Left cardiac atrium (tissue), 4 donors: ENCODE measurements at regions of chr14 and their contacts with region 1.

Region 1: DNA sequence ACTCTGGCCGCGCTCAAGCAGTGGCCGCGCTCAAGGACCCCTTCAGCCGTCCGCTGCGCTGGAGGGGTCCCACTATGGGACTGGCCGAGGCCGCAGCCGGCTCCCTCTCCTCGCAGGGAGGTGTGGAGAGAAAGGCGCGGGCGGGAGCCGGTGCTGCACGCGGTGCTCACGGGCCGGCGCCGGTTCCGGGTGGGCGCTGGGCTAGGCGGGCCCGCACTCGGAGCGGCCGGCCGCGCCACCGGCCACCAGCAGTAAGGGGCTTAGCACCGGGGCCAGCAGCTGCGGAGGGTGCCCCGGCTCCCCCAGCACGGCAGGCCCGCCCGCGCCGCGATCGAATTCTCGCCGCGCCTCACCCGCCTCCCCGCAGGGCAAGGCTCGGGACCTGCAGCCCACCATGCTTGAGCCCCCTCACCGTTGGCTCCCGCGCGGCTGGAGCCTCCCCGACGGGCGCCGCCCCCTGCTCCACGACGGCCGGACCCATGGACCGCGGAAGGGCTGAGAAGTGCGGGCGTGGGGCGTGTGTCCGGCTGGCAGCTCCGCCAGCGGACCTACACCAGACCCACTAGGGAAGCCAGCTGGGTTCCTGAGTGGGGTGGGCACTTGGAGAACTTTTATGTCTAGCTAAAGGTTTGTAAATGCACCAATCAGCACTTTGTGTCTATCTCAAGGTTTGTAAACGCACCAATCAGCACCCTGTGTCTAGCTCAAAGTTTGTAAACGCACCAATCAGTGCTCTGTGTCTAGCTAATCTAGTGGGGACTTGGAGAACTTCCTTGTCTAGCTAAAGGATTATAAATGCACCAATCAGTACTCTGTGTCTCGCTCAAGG is 49.5 kb downstream of the KLHL28 start:
- DNase-seq: peak; percentile 25
- ATAC-seq: peak; percentile 66 to 69

Region 2: GRCh38 chr14:44657696-44658388 is 254.4 kb before region 1 on chr14:
- intact Hi-C with region 1: no loop called
- DNase-seq: no peak
- ATAC-seq: peak in 1 of 2 donors; percentile 70

Region 3: DNA sequence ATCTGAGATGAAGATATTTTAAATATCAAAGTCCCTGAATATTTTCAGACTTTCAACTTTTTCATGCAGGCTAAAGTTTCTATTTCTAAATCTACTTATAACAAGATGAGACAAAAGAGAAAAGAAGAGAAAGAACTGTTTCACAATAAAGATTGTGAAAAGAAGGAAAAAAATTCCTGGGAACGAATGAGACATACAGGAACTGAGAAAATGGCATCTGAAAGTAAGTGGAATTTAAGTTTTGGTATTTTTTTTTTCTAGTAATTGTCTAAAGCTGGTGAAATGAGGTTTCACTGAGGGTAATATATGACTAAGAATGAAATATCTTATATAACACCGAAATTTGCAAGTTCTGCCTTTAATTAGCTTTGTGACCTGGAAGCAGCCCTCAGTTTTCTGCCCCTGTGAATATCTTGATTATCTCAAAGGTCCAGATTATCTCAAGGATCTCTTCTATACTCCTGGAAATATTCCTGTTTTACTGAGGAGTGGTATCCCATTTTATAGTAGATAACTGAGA is 115.9 kb after region 1 on chr14:
- intact Hi-C with region 1: no loop called
- DNase-seq: no peak
- ATAC-seq: no peak

Region 4: GRCh38 chr14:45253068-45253753 is 341.0 kb after region 1 on chr14 and contains the start of gene MIS18BP1:
- intact Hi-C with region 1: loop called in 1 of 2 experiments (anchors 5 kb)
- DNase-seq: peak; percentile 97
- ATAC-seq: peak; percentile 96
- total RNA-seq, gene MIS18BP1: 7.1 to 9.1 TPM

Region 5: DNA sequence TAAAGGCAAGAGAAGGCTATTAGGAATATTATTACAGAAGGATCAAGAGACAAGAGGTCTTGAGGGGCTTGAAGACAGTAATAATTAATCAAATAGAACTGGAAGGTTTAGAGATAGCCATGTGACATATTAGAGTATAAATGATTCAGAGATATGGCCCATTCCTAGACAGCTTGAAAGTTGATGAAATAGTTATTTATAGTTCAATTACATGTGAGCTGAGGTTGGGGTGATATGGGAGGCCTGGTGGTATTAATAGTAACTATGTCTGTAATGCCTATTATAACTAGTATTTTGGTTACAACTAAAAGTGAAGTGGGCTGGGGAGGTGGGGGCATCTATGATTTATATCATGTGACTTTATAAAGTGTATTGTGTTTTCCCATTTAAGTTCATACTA is 354.8 kb after region 1 on chr14:
- intact Hi-C with region 1: loop called in 1 of 2 experiments (anchors 5 kb)
- DNase-seq: no peak
- ATAC-seq: peak; percentile 83 to 87